ENCODE measurements at regions of chr2 and their contacts with region 1.

Region 1: GRCh38 chr2:68521037-68521436 is 53.7 kb downstream of the APLF start:
- DNase-seq: no peak
- H3K4me3 Mint-ChIP-seq: no peak overlapping the region
- H3K27ac Mint-ChIP-seq: peak overlapping the region; percentile 27
- H3K4me1 Mint-ChIP-seq: peaks cover 22% of the 10 kb centered on the region
- H3K27me3 Mint-ChIP-seq: no peaks in the 10 kb centered on the region

Region 2: DNA sequence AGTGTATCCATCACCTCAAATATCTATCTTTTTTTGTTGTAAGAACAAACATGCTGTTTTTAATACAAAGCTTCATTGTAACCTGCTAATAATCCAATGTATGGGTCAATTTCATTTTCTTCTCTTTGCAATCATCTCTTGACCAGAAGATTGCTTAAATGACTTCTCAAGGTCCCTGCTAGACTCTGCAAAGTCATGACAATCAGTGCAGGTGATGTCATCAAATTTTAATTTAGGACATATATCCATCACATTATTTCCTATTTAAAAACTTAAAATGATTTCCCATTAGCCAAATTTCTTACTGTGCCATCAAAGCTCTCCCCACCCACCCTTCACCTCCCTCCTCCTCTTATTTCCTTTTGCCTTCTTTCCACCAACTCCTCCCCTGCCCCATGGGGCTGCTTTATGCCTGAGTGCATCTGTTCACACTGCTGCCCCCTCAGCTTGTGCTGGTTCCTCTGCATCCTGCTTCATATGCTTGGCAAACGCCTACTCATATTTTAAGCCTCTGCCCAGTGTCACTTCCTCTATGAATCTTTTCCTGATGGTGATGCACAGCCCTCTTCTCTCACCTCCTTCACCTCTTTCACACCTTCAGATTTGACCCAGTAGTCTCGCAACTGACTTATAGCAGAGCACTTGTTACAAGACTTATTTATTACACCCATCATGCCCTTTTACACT is 135.7 kb before region 1 on chr2:
- intact Hi-C with region 1: loop called (anchors 10 kb)
- DNase-seq: no peak
- H3K4me3 Mint-ChIP-seq: no peak overlapping the region
- H3K27ac Mint-ChIP-seq: no peak overlapping the region
- H3K4me1 Mint-ChIP-seq: peaks cover 36% of the 10 kb centered on the region
- H3K27me3 Mint-ChIP-seq: peaks cover 18% of the 10 kb centered on the region

Region 3: DNA sequence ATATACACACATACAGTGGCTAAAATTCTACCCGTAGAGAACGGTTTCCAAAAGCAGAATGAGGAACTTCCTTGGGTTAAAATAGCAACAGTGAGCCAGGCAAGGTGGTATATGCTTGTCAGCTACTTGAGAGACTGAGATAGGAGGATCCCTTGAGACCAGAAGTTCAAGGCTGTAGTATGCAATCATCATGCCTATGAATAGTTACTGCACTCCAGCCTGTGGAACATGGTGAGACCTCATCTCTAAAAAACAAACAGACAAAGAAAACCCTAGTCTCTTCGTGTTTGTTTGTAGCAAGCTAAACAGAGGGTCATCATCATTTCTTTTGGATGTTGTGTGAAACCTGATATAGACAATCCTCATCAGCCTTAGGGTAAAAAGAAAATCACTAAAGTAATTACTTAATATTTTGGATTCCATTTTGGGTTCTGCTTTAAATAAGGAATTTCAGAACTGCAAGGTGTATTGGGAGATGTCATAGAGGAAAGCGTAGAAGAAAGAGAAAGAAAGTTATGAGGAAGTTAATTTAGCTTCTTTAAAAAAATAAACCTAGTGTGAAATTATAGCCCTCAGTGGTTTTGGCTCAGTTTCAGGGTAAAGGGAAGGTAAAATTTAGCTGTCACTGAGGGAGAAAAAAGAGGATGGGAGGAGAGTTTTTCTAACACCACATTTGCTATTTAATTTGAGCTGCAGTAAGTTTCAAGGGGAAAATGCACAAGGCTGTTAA is 109.5 kb before region 1 on chr2:
- intact Hi-C with region 1: no loop called
- DNase-seq: no peak
- H3K4me3 Mint-ChIP-seq: no peak overlapping the region
- H3K27ac Mint-ChIP-seq: no peak overlapping the region
- H3K4me1 Mint-ChIP-seq: peaks cover 4% of the 10 kb centered on the region
- H3K27me3 Mint-ChIP-seq: peaks cover 32% of the 10 kb centered on the region

Region 4: GRCh38 chr2:68487773-68488355 is 33.2 kb before region 1 on chr2:
- intact Hi-C with region 1: no loop called
- DNase-seq: no peak
- H3K4me3 Mint-ChIP-seq: no peak overlapping the region
- H3K27ac Mint-ChIP-seq: no peak overlapping the region
- H3K4me1 Mint-ChIP-seq: peaks cover 11% of the 10 kb centered on the region
- H3K27me3 Mint-ChIP-seq: no peaks in the 10 kb centered on the region

Region 5: GRCh38 chr2:68537809-68538208 is 16.8 kb after region 1 on chr2:
- intact Hi-C with region 1: loop called (anchors 2 kb)
- DNase-seq: no peak
- H3K4me3 Mint-ChIP-seq: no peak overlapping the region
- H3K27ac Mint-ChIP-seq: no peak overlapping the region
- H3K4me1 Mint-ChIP-seq: peaks cover 18% of the 10 kb centered on the region
- H3K27me3 Mint-ChIP-seq: no peaks in the 10 kb centered on the region

Region 6: DNA sequence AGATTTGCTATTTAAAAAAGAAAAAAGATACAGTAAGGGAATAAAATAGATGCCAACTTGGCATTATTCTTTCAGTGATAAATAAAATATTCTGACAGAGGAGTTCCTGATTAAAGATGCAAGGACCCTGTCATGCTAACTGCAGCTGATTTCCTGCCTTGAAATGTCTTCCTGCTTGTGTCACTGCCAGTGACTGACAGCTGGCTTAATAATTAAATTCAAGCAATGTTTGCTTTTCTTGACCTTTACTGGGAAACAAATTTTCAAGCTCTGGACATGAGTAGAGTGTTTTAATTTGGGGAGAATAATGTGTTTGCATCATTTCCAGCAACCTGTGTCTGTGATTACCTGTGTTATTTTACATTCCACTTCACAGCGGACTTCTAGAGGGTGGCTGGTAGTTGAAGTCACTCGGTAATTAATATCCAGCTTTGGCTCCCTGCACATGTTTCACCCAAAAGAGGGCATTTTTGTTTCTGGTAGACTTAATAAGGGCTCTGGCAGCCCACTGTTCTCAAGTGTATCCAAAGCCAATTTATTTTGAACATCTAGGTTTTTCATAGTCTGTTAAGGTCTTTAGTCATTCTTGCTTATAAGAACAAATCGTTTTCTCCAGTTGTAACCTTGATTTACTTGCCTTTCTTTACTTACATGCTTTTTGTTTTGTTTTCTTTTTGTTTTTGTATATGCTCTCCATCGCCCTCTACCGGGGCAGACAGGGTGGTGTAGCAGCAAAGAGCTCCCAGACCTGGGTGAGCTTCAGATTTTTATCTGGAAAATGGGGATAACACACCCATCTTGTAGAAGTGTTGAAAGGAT is 73.8 kb after region 1 on chr2:
- intact Hi-C with region 1: loop called (anchors 5 kb)
- DNase-seq: peak; percentile 31
- H3K4me3 Mint-ChIP-seq: no peak overlapping the region
- H3K27ac Mint-ChIP-seq: no peak overlapping the region
- H3K4me1 Mint-ChIP-seq: peaks cover 9% of the 10 kb centered on the region
- H3K27me3 Mint-ChIP-seq: peaks cover 13% of the 10 kb centered on the region

Region 7: GRCh38 chr2:68689553-68690537 is 168.8 kb after region 1 on chr2:
- intact Hi-C with region 1: loop called (anchors 1 kb)
- DNase-seq: no peak
- H3K4me3 Mint-ChIP-seq: no peak overlapping the region
- H3K27ac Mint-ChIP-seq: peak overlapping the region; percentile 67
- H3K4me1 Mint-ChIP-seq: peaks cover 20% of the 10 kb centered on the region
- H3K27me3 Mint-ChIP-seq: peaks cover 14% of the 10 kb centered on the region

Region 8: DNA sequence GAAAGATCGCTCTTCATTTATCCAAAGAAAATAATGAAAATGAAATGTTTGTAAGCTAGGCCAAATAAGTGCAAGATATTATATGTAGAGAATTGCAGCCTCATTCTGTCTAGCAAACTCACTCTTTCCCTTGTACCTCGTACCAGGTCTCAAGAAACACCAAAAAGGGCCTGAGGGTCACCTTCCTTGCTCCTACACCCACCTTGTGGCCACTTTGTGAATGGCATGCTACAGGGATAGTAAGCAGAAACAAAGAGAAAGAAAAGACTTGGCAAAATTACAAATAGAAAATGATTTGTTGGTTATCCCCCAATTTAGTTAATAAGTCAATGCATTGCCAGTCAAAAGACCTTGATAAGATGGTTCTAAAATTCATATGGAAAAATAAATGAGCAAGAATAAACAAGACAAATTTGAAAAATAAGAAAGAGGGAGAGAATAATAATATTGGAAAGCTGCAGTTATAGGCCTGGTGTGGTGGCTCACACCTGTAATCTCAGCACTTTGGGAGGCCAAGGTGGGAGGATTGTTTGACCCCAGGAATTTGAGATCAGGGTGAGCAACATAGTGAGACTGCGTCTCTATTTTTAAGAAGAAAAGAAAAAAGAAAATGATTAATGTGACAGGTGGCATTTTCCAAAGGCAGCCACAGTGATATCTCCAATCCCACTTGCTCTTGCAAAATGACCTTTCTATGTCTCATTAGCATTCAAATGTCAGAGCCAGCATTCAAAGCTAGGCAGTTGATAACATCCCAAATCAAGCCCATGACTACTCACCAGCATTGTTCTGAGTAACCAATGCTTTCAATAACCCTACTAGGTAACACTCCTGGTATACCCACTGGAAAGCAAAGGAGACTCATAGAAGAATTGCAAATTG is 389.0 kb after region 1 on chr2:
- intact Hi-C with region 1: loop called (anchors 5 kb)
- DNase-seq: peak; percentile 62
- H3K4me3 Mint-ChIP-seq: no peak overlapping the region
- H3K27ac Mint-ChIP-seq: peak overlapping the region; percentile 70
- H3K4me1 Mint-ChIP-seq: peaks cover 33% of the 10 kb centered on the region
- H3K27me3 Mint-ChIP-seq: no peaks in the 10 kb centered on the region